Endothelial cell of umbilical vein (primary cell): ENCODE measurements at regions of chr18 and their contacts with region 1.

Region 1: GRCh38 chr18:35459005-35459441 is 38.7 kb downstream of the INO80C start:
- DNase-seq: peak; percentile 98
- H3K4me3 ChIP-seq: no peak overlapping the region
- H3K27ac ChIP-seq: peak overlapping the region; percentile 90
- H3K4me1 ChIP-seq: peaks cover 87% of the 10 kb centered on the region
- H3K27me3 ChIP-seq: no peaks in the 10 kb centered on the region
- CTCF ChIP-seq: no peak
- POLR2A ChIP-seq: peak; percentile 86

Region 2: DNA sequence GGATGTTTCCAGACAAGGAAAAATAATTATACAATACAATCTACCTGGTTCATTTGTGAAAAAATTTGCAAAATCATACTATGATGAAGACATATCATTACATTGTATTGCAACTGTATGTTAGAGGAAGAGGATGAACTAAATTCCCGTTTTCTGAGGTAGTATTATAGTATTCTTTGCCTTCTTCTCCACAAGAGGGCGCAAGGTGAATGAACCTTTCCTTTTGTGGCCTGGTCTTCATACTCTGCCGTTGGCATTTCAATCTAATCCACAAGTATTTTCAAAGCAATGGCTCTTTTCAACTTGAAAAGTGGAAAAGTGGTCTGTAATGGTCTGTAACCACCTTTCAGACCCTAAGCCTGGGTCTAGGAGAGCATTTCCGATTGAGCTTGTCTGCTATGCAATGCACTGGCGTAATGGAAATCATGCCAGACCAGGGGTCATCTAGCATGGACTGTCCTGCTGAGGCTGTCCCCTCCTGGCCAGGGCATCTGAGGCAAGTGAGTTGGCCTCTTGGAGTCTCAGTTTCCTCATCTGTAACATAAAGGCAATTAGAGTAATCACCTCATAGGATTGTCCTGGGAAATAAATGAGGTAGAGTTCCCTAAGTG is 51.0 kb before region 1 on chr18:
- CTCF ChIA-PET with region 1: interaction called, 5 read pairs
- POLR2A ChIA-PET with region 1: no interaction called
- dilution Hi-C with region 1: no loop called
- intact Hi-C with region 1: loop called (anchors 1 kb)
- DNase-seq: peak; percentile 80
- H3K4me3 ChIP-seq: no peak overlapping the region
- H3K27ac ChIP-seq: peak overlapping the region; percentile 34
- H3K4me1 ChIP-seq: peaks cover 4% of the 10 kb centered on the region
- H3K27me3 ChIP-seq: no peaks in the 10 kb centered on the region
- CTCF ChIP-seq: peak; percentile 58 to 69
- POLR2A ChIP-seq: no peak

Region 3: GRCh38 chr18:35478520-35479435 is 19.8 kb after region 1 on chr18:
- CTCF ChIA-PET with region 1: interaction called, 3 read pairs
- POLR2A ChIA-PET with region 1: no interaction called
- dilution Hi-C with region 1: no loop called
- intact Hi-C with region 1: loop called (anchors 2 kb)
- DNase-seq: peak; percentile 81
- H3K4me3 ChIP-seq: peak overlapping the region in 2 of 3 experiments; percentile 46 to 47
- H3K27ac ChIP-seq: peak overlapping the region; percentile 90
- H3K4me1 ChIP-seq: peaks cover 45% of the 10 kb centered on the region
- H3K27me3 ChIP-seq: no peaks in the 10 kb centered on the region
- CTCF ChIP-seq: no peak
- POLR2A ChIP-seq: no peak

Region 4: GRCh38 chr18:35580701-35581539 is 121.9 kb after region 1 on chr18:
- CTCF ChIA-PET with region 1: no interaction called
- POLR2A ChIA-PET with region 1: no interaction called
- dilution Hi-C with region 1: no loop called
- intact Hi-C with region 1: loop called (anchors 2 kb)
- DNase-seq: peak; percentile 58
- H3K4me3 ChIP-seq: peak overlapping the region; percentile 67 to 70 (median 67)
- H3K27ac ChIP-seq: peak overlapping the region; percentile 84
- H3K4me1 ChIP-seq: peaks cover 11% of the 10 kb centered on the region
- H3K27me3 ChIP-seq: no peaks in the 10 kb centered on the region
- CTCF ChIP-seq: no peak
- POLR2A ChIP-seq: no peak

Region 5: GRCh38 chr18:35786365-35787042 is 327.5 kb after region 1 on chr18:
- CTCF ChIA-PET with region 1: no interaction called
- POLR2A ChIA-PET with region 1: no interaction called
- dilution Hi-C with region 1: no loop called
- intact Hi-C with region 1: no loop called
- DNase-seq: no peak
- H3K4me3 ChIP-seq: no peak overlapping the region
- H3K27ac ChIP-seq: no peak overlapping the region
- H3K4me1 ChIP-seq: no peaks in the 10 kb centered on the region
- H3K27me3 ChIP-seq: peaks cover 10 to 12% of the 10 kb centered on the region in 2 experiments
- CTCF ChIP-seq: no peak
- POLR2A ChIP-seq: no peak

Region 6: DNA sequence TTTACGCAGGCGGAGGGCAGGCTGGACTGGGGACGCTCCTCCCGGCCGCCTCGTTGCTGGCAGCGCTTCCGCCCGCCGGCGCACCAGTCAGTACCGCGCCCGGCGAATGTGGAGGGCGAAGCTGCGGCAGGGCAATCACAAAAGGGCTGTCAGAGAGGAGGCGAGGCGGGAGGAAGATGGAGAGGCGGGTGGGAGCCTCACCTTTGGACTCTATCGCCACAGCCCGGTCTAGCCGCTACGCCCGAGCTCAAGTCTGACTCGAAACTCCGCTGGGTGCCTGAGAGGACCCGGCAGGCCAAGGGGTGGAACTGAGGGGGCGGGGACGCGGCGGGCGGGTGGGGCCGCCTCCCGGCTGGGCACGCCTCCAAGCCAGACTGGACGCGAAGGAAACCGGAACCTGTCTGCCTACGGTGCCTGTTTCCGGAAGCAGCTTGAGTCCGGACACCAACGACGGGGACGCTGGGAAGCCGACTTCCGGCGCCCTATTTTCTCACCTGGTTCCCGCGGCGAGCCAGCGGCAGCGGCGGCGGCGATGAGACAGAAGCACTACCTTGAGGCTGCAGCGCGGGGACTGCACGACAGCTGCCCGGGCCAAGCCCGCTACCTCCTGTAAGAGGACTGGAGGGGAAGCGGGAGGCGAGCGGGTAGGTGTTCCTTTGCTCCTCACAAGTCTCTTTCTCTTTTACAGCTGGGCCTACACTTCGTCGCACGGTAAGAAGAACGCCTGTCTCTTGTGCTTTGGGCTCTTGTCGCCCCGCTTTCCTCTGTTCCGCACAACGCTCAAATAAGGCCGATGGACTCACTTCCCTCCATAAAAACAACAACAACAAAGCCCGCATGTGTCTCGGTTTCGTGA is 513.4 kb after region 1 on chr18 and contains the start of gene RMP24:
- CTCF ChIA-PET with region 1: no interaction called
- POLR2A ChIA-PET with region 1: no interaction called
- dilution Hi-C with region 1: no loop called
- intact Hi-C with region 1: loop called (anchors 5 kb)
- DNase-seq: peak; percentile 89
- H3K4me3 ChIP-seq: peak within 1 kb of the TSS; percentile 83 to 99 (median 91)
- H3K27ac ChIP-seq: peak within 1 kb of the TSS; percentile 91
- H3K4me1 ChIP-seq: peaks cover 18% of the 10 kb centered on the region
- H3K27me3 ChIP-seq: peaks cover 4% of the 10 kb centered on the region in 2 experiments
- CTCF ChIP-seq: no peak
- POLR2A ChIP-seq: peak; percentile 78